ENCODE measurements at regions of chr10 and their contacts with region 1.

Region 1: DNA sequence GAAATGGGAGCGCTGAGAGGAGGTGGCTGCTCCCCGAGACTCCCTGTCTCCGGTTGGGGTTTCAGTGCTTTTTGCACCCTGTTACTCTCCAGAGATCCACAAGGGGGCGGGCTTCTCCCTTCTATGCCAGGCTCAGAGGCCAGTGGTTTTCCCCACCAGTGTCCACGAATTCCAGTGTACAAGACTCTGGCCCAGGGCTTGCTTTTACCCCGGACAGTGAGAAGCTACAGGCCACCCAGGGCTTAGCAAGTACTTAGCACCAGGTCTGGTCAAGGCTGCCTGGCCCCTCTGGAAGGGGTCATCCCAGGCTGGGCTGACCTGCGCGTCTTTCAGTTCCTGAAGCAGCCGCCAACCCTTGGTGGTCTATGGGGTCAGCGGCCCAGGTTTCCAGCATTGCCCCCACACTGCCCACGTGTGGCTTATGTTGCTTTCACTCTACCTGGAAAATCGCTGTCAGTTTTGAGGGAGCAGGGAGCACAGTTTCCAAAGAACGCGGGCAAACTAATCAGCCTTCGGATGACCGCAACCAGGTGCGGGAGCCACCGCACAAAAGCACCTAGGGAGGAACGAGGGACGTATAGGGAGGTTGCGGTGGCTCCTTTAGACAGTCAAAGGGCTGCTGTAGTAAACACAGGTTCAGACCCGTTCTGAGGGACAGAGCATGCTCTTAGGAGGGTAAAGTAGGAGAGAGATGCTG is 6.8 kb downstream of the CYP26A1 start:
- DNase-seq: no peak
- H3K4me3 ChIP-seq: no peak overlapping the region
- H3K27ac ChIP-seq: no peak overlapping the region
- H3K4me1 ChIP-seq: no peaks in the 10 kb centered on the region
- H3K27me3 ChIP-seq: no peaks in the 10 kb centered on the region
- CTCF ChIP-seq: peak; percentile 63 to 79 (median 72)
- POLR2A ChIP-seq: no peak

Region 2: GRCh38 chr10:93288654-93289634 is 208.4 kb after region 1 on chr10:
- intact Hi-C with region 1: loop called (anchors 5 kb)
- DNase-seq: peak; percentile 69
- H3K4me3 ChIP-seq: no peak overlapping the region
- H3K27ac ChIP-seq: no peak overlapping the region
- H3K4me1 ChIP-seq: no peaks in the 10 kb centered on the region
- H3K27me3 ChIP-seq: no peaks in the 10 kb centered on the region
- CTCF ChIP-seq: peak; percentile 29 to 89 (median 85)
- POLR2A ChIP-seq: no peak

Region 3: DNA sequence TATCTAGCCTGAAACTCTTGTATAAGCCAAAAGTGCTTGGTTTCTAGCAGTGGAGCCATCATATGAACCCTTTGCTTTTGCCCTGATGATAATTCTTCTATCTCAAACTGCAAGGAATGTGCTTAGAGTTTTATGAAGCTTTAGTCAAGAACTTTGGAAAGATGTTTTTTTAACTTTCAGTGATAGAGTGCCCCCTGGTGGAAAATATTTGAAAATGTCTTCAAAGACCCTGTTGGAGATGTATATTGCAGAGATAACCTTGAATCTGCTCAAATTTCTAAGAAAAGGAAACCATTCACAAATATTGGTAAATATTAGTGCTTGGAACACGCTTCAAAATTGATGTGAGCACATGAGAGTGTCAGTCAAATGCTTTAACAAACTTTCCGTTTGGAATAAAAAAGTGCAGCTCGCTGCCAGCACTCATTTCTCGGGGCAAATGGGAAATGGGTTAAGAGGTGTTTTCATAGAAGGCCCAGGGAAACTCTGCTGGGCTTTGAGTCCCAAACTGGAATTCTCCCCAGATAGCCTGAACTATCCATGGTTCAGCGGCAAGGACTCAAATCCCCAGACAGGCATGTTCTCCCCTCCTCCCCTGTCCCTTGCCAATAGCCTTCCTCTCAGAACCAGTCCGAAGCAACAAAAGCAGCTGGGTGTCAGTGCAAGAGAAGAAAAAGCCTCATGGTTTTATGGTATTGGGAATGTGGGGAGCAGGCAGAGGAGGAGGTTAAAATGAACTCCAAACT is 272.3 kb after region 1 on chr10:
- intact Hi-C with region 1: loop called (anchors 10 kb)
- DNase-seq: no peak
- H3K4me3 ChIP-seq: no peak overlapping the region
- H3K27ac ChIP-seq: no peak overlapping the region
- H3K4me1 ChIP-seq: no peaks in the 10 kb centered on the region
- H3K27me3 ChIP-seq: no peaks in the 10 kb centered on the region
- CTCF ChIP-seq: peak; percentile 28 to 68 (median 61)
- POLR2A ChIP-seq: no peak

Measured in prostate gland (tissue), 2 donors.